ENCODE measurements at regions of chr18 and their contacts with region 1.

Region 1: GRCh38 chr18:47997338-47997780 is 66.9 kb upstream of the SMAD2 start:
- DNase-seq: peak; percentile 62
- ATAC-seq: peak; percentile 49
- H3K4me3 Mint-ChIP-seq: no peak overlapping the region
- H3K27ac Mint-ChIP-seq: no peak overlapping the region
- H3K4me1 Mint-ChIP-seq: no peaks in the 10 kb centered on the region
- H3K27me3 Mint-ChIP-seq: no peaks in the 10 kb centered on the region
- CTCF ChIP-seq: peak; percentile 73

Region 2: DNA sequence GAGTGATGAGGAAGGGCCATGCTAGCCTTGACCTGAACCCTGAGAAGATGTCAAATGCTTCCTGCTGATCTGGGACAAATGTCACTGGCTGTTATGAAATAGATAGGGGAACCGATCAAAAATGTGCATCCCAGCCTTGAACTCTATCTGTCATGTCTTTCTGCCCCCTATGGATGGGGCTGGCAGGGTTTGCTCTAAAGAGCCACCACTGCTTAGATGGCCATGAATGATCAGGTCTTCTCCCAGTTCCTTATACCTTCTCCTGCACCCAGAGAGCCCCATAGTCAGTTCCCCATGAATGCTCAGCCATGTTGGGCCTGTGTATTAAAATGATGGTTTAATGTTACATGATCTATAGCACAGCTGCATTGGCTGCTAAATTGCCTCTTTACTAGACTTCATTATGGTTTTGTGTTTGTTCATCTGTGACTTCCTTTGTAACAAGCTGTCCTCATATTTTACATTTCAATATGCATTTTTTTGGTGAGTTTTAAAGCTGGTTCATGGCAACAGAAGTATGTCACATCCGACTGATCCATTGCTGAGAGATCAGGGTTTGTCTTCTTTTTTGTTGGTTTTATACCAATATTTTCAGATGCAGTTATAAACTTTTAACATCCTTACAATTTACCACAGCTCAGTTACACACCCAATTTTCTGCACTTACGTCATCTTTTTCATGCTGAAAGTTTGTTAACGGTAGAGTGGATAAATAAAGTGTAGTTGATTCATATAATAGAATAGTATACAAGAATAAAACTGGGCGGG is 10.6 kb before region 1 on chr18:
- CTCF ChIA-PET with region 1: interaction called, 15 read pairs
- POLR2A ChIA-PET with region 1: interaction called, 3 read pairs
- intact Hi-C with region 1: no loop called
- DNase-seq: no peak
- ATAC-seq: no peak
- H3K4me3 Mint-ChIP-seq: no peak overlapping the region
- H3K27ac Mint-ChIP-seq: no peak overlapping the region
- H3K4me1 Mint-ChIP-seq: no peaks in the 10 kb centered on the region
- H3K27me3 Mint-ChIP-seq: no peaks in the 10 kb centered on the region
- CTCF ChIP-seq: no peak

Region 3: DNA sequence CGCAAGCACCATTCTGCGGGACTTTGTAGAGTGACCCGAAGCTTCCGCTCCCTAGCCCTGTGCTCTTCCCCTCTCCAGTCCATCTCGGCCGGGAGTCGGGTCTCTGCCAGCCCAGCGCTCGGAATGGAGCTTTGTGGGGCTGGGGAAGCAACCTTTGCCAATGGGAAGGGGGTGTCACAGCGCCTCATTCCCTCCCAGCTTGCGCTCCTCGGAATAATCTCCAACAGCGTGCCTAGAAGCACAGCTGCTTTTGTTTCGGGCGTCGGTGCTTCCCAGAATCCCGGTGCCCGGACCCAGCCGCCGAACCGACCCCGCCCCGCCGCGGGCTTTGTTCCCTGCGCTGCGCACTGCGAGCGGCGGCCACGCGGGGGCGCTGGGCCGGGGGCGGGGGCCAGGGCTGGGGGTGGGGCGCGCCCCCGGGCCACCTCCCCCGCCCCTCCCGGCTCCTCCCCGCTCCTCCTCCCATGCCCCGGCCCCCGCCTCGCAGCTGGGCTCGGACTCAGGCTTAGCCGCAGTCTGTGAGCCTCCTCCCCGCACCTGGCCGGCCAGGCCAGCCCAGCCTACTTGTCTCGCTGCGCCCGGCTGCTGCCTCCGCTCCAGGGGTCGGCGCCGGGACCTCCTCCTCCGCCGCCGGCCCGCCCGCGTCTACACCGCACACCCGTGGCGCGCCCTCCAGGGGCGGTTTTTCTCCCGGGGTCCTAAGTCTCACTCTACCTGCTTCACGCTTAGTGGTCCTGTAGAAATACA is 10.8 kb after region 1 on chr18:
- CTCF ChIA-PET with region 1: interaction called, 17 read pairs
- POLR2A ChIA-PET with region 1: no interaction called
- intact Hi-C with region 1: no loop called
- DNase-seq: peak; percentile 36
- ATAC-seq: peak; percentile 71
- H3K4me3 Mint-ChIP-seq: peak overlapping the region; percentile 54
- H3K27ac Mint-ChIP-seq: no peak overlapping the region
- H3K4me1 Mint-ChIP-seq: peaks cover 6% of the 10 kb centered on the region
- H3K27me3 Mint-ChIP-seq: peaks cover 9% of the 10 kb centered on the region
- CTCF ChIP-seq: peak; percentile 77

Region 4: DNA sequence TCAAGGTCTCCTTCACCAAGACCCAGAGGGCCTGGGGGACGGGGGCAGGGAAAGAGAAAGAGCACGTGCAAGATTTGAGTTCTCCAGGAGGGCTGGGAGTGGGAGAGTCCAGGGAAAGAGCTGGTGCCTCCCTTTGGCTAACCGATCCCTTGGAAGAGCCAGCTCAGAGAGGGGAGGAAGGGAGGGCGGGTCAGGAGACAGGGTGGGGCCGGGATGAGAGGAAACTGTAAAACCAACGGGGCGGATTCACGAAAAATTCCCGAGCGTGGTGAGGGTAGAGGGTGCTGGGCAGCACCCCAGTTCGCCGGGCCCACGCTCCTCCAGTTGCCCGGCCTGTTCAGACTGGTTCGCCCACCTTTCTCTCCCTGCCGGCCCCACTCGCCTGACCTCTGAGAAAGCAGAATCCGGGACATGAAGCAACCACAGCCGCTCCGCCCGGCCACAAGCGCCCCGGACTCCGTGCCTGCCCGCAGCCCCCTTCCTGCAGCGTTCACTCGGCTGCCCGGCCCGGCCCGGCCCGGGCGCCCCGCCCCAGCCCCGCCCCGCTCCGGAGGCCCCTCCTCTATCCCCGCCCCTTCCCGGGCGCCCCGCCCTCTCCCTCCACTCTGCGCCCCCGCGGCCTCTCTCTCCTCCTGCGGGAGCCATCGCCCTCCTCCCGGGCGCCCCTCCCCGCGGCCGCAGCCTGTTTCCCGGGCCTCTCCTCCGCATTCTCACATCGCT is 164.0 kb after region 1 on chr18:
- CTCF ChIA-PET with region 1: no interaction called
- POLR2A ChIA-PET with region 1: no interaction called
- intact Hi-C with region 1: no loop called
- DNase-seq: peak; percentile 59
- ATAC-seq: peak; percentile 97
- H3K4me3 Mint-ChIP-seq: peak overlapping the region; percentile 56
- H3K27ac Mint-ChIP-seq: no peak overlapping the region
- H3K4me1 Mint-ChIP-seq: no peaks in the 10 kb centered on the region
- H3K27me3 Mint-ChIP-seq: peaks cover 15% of the 10 kb centered on the region
- CTCF ChIP-seq: no peak

Measured in activated CD8-positive, alpha-beta T cell treated with anti-CD3 and anti-CD28 coated beads for 36 hours (primary cell).